ENCODE measurements at regions of chr12 and their contacts with region 1.

Region 1: DNA sequence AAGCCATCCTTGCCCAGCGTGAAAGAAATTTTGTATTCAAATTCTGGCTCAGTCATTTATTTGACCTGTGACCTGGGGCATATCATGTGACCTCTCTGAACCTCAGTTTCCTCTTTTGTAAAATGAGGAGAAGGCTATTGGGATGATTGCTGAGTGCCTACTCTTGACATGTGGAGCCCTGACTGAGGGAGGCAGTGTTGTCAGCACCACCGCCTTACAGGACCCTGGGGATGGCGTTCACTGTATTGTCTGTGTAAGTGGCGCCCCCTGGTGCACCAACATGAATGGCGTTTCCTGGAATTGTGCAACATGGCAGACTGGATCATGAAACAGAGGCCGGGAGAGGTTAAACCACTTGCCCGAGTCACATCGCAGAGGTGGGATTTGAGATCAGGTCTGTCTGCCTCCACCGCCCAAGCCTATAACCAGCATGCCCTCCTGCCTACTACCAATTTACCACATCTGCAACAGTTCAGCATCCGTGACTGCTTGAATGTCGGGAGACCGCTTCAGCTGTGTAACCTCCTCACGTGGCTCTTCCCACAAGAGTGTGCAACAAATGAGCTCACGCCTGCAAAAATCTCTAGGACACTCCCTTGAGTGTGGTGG is 20.1 kb upstream of the CCDC63 start:
- DNase-seq: peak; percentile 83
- CTCF ChIP-seq: peak; percentile 91

Region 2: DNA sequence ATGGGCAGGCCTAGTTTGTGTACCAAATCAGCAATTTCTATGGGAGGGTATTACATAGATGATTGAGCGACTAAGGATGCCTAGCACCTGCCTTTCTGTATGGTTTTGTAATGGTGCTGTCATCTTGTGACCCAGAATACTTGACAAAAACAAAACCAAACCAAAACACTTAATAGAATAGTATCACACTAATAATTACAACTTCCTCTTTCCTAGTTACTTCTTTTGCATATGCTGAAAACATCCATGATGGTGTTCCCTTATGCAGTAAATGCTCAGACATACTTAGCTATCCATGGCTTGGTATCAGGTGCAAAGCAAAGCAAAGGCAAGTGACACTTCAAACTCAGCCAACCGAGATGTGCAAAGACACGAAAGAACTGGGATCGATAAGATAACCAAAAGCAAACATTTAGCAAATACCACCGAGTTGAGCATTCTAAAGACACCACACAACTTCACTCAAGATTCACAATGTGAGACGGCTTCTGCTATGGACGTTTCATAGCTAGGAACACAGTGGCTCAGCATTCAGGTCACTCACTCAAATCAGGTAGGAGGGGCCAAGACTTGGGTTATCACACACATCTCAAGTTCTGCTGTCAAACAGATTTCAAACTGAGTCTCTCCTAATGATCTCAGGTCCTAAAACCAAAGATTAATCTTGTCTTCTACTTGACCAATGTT is 108.3 kb before region 1 on chr12:
- in situ Hi-C with region 1: loop called (anchors 5 kb)
- DNase-seq: no peak
- CTCF ChIP-seq: no peak

Region 3: GRCh38 chr12:111224186-111225066 is 397.7 kb after region 1 on chr12:
- in situ Hi-C with region 1: no loop called
- DNase-seq: no peak
- CTCF ChIP-seq: no peak

Region 4: DNA sequence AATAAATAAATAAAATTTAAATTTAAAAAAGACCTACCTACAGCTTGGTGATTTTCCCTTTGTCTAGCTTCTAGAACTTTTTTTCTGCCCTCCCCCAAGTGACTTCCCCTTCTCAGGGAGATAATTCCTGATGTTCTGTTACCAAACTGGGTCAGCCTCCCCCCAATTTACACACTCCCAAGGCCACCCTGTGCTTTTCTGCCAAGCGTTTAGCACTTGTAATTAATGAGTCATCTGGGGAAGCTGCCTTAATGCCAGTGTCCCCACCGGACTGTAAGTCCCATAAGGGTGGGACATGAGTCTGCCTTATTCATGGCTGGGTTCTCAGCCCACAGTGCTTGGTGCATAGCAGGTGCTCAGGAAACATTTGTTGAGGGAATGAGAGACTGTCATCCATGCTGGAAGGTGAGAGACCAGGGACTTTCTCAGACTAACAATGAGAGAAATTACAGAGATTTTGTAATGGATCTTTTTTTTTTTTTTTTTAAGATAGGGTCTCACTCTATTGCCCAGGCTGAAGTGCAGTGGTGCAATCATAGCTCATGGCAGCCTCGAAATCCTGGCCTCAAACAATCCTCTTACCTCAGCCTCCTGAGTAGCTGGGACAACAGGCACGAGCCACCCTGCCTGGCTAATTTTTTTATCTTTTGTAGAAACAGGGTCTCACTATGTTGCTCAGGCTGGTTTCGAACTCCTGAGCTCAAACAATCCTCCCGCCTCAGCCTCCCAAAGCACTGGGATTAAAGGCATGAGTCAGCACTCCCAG is 435.4 kb after region 1 on chr12:
- in situ Hi-C with region 1: no loop called
- DNase-seq: no peak
- CTCF ChIP-seq: no peak